ENCODE measurements at regions of chr2 and their contacts with region 1.

Region 1: GRCh38 chr2:174039551-174040416 is 74.6 kb upstream of the SP3 start:
- DNase-seq: peak; percentile 94 to 95
- ATAC-seq: peak; percentile 86
- H3K4me3 ChIP-seq: no peak overlapping the region
- H3K27ac ChIP-seq: peak overlapping the region in 1 of 2 donors; percentile 94
- H3K4me1 ChIP-seq: no peaks in the 10 kb centered on the region
- H3K27me3 ChIP-seq: no peaks in the 10 kb centered on the region

Region 2: GRCh38 chr2:173884025-173884802 is 155.6 kb before region 1 on chr2:
- intact Hi-C with region 1: loop called (anchors 10 kb)
- DNase-seq: peak in 1 of 2 donors; percentile 68
- ATAC-seq: no peak
- H3K4me3 ChIP-seq: no peak overlapping the region
- H3K27ac ChIP-seq: no peak overlapping the region
- H3K4me1 ChIP-seq: peaks cover 0 to 6% of the 10 kb centered on the region in 2 donors
- H3K27me3 ChIP-seq: no peaks in the 10 kb centered on the region

Region 3: DNA sequence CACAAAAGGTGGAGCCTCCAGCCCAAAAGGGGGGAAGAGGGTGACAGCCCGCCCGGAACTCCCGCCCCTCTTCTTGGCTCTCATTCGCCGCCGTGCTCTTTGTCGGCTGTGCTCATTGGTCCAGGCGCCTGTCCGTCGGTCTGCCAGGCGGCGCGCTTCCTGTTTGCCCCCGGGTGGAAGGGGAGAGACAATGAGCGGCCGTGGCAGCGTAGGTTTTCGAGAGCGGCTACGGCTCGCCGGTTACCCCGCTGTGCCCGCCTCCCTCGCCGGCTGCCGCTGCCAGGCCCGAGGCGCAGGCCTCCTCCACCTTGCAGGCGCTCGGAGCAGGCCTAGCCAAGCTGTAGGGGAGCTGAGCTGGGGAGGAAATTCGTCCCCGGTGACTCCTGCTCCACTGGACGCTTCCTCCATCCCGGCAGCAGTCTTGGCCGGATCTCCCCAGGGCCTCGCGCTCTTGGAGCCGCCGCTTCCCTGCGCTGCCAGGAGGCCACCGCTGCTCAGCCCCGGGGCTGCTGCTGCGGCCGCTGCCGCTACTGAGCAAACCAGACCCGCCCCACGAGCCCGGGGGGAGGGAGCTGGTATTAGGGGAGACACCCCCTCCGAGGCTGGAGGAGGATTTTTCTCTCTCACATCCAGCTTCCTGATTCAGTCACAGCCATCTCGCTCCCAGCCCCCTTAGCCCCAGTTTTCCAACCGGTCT is 74.3 kb before region 1 on chr2 and contains the start of gene SP3:
- intact Hi-C with region 1: loop called in 1 of 2 experiments (anchors 1 kb)
- DNase-seq: peak; percentile 99
- ATAC-seq: peak; percentile 95
- H3K4me3 ChIP-seq: peak within 1 kb of the TSS; percentile 100
- H3K27ac ChIP-seq: peak within 1 kb of the TSS; percentile 98 to 99
- H3K4me1 ChIP-seq: peaks cover 0 to 3% of the 10 kb centered on the region in 2 donors
- H3K27me3 ChIP-seq: no peaks in the 10 kb centered on the region
- total RNA-seq, gene SP3: 79.1 to 97.6 TPM

Region 4: GRCh38 chr2:173982918-173983317 is 56.9 kb before region 1 on chr2:
- intact Hi-C with region 1: loop called in 1 of 2 experiments (anchors 5 kb)
- DNase-seq: peak in 1 of 2 donors; percentile 61
- ATAC-seq: peak; percentile 9
- H3K4me3 ChIP-seq: no peak overlapping the region
- H3K27ac ChIP-seq: peak overlapping the region; percentile 84 to 90
- H3K4me1 ChIP-seq: peaks cover 2 to 11% of the 10 kb centered on the region in 2 donors
- H3K27me3 ChIP-seq: no peaks in the 10 kb centered on the region

Region 5: GRCh38 chr2:173990970-173991819 is 48.6 kb before region 1 on chr2:
- intact Hi-C with region 1: loop called (anchors 5 kb)
- DNase-seq: peak; percentile 93 to 94
- ATAC-seq: peak; percentile 87
- H3K4me3 ChIP-seq: no peak overlapping the region
- H3K27ac ChIP-seq: peak overlapping the region in 1 of 2 donors; percentile 55
- H3K4me1 ChIP-seq: peaks cover 4 to 18% of the 10 kb centered on the region in 2 donors
- H3K27me3 ChIP-seq: no peaks in the 10 kb centered on the region

Region 6: GRCh38 chr2:174341286-174341994 is 301.7 kb after region 1 on chr2:
- intact Hi-C with region 1: loop called in 1 of 2 experiments (anchors 10 kb)
- DNase-seq: peak; percentile 89 to 95
- ATAC-seq: peak; percentile 95
- H3K4me3 ChIP-seq: no peak overlapping the region
- H3K27ac ChIP-seq: no peak overlapping the region
- H3K4me1 ChIP-seq: no peaks in the 10 kb centered on the region
- H3K27me3 ChIP-seq: peaks cover 0 to 1% of the 10 kb centered on the region in 2 donors